Psoas muscle (tissue), 8 donors: ENCODE measurements at regions of chr3 and their contacts with region 1.

Region 1: DNA sequence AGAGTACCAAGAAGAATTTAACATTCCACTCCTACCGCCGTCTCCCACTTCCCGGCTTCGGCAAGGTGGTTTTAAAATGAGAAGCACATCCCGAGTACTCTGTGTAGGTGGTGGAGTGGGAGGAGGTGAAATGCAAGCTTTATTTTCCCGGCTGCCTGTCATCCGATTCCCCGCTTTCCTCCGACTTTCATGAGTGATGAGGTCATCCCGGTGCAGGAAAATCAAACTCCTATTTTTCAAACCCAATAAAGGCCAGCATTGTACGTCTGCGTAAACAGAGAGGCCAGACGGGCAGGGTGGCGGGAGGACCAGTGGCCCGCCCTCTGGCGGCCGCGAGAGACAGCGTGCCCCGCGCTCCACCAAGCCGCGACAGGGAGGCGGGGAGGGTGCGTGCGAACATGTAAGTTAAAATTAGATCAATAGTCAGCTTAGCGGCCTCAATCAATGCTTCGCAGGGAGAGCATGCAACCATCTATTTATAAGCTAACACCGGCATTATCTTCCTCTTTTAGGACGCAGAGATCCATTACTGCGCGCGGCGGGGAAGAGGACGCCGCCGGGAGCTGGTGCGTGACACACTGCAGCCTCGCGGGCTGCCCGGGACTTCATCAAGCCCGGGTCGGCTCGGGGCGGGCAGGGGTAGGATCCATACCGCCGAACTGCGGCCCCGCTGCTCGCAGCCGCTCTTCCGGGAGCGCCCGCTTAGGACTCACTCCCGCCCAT is 163.3 kb downstream of the CD47 start:
- DNase-seq: peak; percentile 72 to 85
- ATAC-seq: peak; percentile 93 to 98 (median 96)
- H3K4me3 ChIP-seq: peak overlapping the region; percentile 65
- H3K27ac ChIP-seq: no peak overlapping the region
- H3K4me1 ChIP-seq: peaks cover 5% of the 10 kb centered on the region
- H3K27me3 ChIP-seq: no peaks in the 10 kb centered on the region
- CTCF ChIP-seq: peak; percentile 91

Region 2: DNA sequence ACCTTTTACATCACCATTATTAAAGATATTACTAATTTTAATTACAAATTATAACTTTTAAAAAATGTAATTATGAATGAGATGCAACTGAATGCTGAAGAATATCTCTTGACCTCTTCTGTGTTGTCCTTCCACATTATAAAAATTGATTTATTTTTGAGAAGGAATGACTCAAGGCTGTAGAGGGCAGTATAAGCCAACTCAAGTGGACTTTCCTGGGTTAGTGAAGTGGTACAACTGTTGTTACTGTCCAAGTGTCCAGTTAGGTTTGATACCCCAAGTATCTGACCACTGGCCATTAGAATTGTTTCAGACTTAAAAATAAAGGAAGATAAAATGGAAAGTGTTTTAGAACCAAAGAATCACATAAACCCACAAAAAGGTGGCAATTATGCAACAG is 352.9 kb before region 1 on chr3:
- intact Hi-C with region 1: loop called in 1 of 2 experiments (anchors 10 kb)
- DNase-seq: no peak
- ATAC-seq: peak; percentile 53 to 90 (median 78)
- H3K4me3 ChIP-seq: no peak overlapping the region
- H3K27ac ChIP-seq: no peak overlapping the region
- H3K4me1 ChIP-seq: no peaks in the 10 kb centered on the region
- H3K27me3 ChIP-seq: no peaks in the 10 kb centered on the region
- CTCF ChIP-seq: peak; percentile 62

Region 3: DNA sequence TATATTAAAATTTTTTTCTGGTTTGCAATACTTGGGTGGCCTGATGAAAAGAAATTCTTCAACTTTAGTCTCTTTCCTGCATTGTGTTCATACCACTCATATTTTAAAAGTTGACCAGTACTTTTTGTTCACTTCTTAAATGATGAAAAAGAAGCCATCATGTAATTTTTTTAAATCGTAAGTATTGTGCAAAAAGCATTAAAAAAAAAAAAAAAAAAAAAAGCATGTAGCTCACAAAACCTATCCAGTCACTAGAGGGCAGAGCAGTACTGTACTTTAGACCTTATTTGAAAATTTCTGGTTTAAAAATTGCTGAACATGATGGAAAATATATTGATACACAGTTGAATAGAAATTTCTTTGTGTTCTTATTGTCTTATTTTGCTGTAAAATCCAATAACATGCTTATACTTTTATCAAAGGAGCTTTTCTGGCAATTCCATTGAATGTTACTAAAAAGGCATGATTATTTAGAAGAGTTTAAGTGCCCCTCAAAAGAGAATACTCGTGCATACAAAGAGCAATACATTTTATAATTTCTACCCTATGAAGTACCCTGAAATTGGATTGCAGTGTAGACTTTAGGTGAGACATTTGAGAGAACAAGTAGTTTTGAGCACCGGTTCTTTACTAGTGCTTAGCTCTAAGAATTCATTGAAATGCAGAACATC is 267.1 kb before region 1 on chr3:
- intact Hi-C with region 1: loop called (anchors 10 kb)
- DNase-seq: no peak
- ATAC-seq: peak in 1 of 4 donors; percentile 56
- H3K4me3 ChIP-seq: no peak overlapping the region
- H3K27ac ChIP-seq: no peak overlapping the region
- H3K4me1 ChIP-seq: peaks cover 25% of the 10 kb centered on the region
- H3K27me3 ChIP-seq: no peaks in the 10 kb centered on the region
- CTCF ChIP-seq: peak; percentile 64

Region 4: DNA sequence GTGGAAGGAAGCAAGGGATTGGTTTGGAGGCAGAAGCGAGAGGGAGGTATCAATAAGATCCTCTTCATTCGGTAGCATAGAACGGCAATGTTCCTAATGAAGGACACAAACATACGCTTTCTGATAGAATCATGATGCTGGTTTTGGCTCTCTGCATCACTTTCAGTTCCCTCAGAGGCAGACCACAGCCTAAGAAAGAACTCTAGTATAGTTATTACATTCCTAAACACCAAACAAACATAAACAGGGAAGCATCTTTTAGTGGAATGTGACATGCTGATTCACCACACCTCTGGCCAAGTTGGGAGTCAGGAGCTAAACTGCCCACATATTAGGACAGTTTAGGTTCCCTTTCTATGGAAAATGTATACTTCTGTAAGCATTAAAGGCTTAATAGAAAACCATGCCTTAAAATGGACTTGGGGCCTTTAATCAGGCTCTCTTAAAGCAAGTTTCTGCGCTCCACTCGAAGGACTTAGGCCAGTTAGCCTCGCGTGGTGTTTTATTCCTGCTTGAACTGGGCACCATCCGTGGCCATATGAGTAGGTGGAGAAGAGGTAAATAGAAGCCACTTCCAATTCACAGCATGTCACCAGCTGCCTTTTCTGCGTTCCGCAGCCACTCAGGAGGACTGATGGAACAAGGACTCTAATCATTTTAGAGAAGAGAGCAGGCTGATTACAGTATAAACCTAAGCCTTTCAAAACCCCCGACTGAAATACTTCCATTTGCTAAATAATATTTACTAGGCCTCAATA is 109.6 kb after region 1 on chr3:
- intact Hi-C with region 1: no loop called
- DNase-seq: no peak
- ATAC-seq: no peak
- H3K4me3 ChIP-seq: no peak overlapping the region
- H3K27ac ChIP-seq: no peak overlapping the region
- H3K4me1 ChIP-seq: no peaks in the 10 kb centered on the region
- H3K27me3 ChIP-seq: no peaks in the 10 kb centered on the region
- CTCF ChIP-seq: no peak

Region 5: GRCh38 chr3:108388136-108389132 is 460.9 kb after region 1 on chr3:
- intact Hi-C with region 1: no loop called
- DNase-seq: no peak
- ATAC-seq: no peak
- H3K4me3 ChIP-seq: no peak overlapping the region
- H3K27ac ChIP-seq: no peak overlapping the region
- H3K4me1 ChIP-seq: no peaks in the 10 kb centered on the region
- H3K27me3 ChIP-seq: no peaks in the 10 kb centered on the region
- CTCF ChIP-seq: no peak